Colonic mucosa (tissue), 4 donors: ENCODE measurements at regions of chr9 and their contacts with region 1.

Region 1: GRCh38 chr9:33404788-33405362 is 2.5 kb upstream of the AQP7 start:
- DNase-seq: no peak
- H3K4me3 ChIP-seq: no peak overlapping the region
- H3K27ac ChIP-seq: no peak overlapping the region
- H3K4me1 ChIP-seq: no peaks in the 10 kb centered on the region
- H3K27me3 ChIP-seq: no peaks in the 10 kb centered on the region
- CTCF ChIP-seq: no peak

Region 2: DNA sequence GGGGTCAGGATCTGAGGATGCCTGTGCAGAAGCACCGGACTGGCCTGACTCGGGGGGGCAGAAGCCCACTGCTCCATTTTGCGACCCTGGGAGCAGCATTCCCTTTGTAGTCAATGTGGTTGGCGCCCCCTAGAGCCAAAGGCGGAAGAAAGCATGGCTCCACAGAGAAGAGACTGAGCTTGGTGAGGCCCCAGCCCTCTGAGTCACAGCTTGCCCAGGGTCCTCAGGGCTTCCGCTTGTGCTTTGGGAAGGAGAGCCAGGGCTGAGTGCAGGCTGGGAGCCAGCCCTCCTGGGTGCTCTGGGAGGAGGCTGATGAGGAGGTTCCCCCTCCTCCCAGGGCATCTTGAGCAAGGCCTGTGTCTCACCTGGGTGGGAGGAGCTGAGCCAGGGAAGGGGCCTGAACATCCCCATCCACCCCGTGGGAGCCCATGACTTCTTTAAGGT is 48.0 kb after region 1 on chr9:
- intact Hi-C with region 1: loop called (anchors 5 kb)
- DNase-seq: peak; percentile 63
- H3K4me3 ChIP-seq: no peak overlapping the region
- H3K27ac ChIP-seq: no peak overlapping the region
- H3K4me1 ChIP-seq: no peaks in the 10 kb centered on the region
- H3K27me3 ChIP-seq: no peaks in the 10 kb centered on the region
- CTCF ChIP-seq: peak; percentile 48